ENCODE measurements at regions of chr1 and their contacts with region 1.

Region 1: GRCh38 chr1:116151739-116152576 is 40.8 kb downstream of the MAB21L3 start:
- DNase-seq: peak; percentile 88 to 94 (median 93)
- ATAC-seq: peak; percentile 99
- H3K4me3 ChIP-seq: peak overlapping the region; percentile 45
- H3K27ac ChIP-seq: peak overlapping the region; percentile 51; the same call in 1 of the 3 replicates
- H3K4me1 ChIP-seq: peaks cover 4 to 7% of the 10 kb centered on the region in 2 experiments
- H3K27me3 ChIP-seq: peaks cover 7% of the 10 kb centered on the region in 2 experiments; a peak in 2 of 5 replicates
- CTCF ChIP-seq: peak; percentile 94 to 99 (median 97)
- EP300 ChIP-seq: no peak
- POLR2A ChIP-seq: no peak
- RAD21 ChIP-seq: peak; percentile 92 to 93

Region 2: GRCh38 chr1:116139592-116140134 is 12.3 kb before region 1 on chr1:
- CTCF ChIA-PET with region 1: interaction called, 4 read pairs
- POLR2A ChIA-PET with region 1: interaction called, 5 read pairs
- in situ Hi-C with region 1: no loop called
- intact Hi-C with region 1: loop called (anchors 1 kb)
- DNase-seq: no peak
- ATAC-seq: no peak
- H3K4me3 ChIP-seq: no peak overlapping the region
- H3K27ac ChIP-seq: no peak overlapping the region
- H3K4me1 ChIP-seq: no peaks in the 10 kb centered on the region; a peak in 1 of 5 replicates
- H3K27me3 ChIP-seq: no peaks in the 10 kb centered on the region
- CTCF ChIP-seq: no peak
- EP300 ChIP-seq: no peak
- POLR2A ChIP-seq: no peak
- RAD21 ChIP-seq: no peak

Region 3: DNA sequence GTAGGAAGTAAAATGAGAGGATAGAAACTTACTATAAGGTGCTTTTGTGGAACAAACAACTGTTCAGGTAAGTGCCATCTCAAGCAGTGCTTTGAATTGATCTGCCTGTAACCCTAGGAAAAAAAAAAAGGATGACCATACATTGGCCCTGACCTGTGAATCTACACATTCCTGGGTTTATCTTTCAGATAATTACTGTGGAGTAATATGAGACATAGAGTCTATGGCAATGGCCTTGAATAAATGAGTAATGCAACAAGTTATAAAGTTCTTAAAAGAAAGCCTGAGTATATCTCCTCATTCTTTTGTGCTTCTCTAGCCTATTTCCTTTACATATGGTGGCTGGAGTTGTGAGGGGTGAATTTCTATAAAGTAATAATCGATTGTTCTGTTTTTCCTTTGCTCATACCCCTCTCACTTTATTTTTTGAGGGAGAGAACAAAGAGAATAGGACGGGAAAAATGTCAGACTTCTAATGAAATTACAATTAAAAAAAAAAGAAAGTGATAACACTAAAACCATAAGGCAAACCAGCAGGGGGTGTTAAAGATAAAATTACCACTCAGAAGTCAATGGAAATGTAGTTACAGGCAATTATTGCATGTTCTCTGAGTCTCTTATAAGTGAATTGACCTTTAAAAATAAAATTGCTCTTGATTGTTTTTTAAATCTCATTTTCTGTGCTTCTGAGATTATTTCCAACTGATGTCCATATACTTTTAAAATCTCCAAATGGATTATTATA is 208.6 kb after region 1 on chr1:
- CTCF ChIA-PET with region 1: no interaction called
- POLR2A ChIA-PET with region 1: no interaction called
- in situ Hi-C with region 1: no loop called
- intact Hi-C with region 1: loop called (anchors 5 kb)
- DNase-seq: peak; percentile 39 to 59 (median 50)
- ATAC-seq: peak; percentile 65
- H3K4me3 ChIP-seq: no peak overlapping the region
- H3K27ac ChIP-seq: no peak overlapping the region
- H3K4me1 ChIP-seq: no peaks in the 10 kb centered on the region; a peak in 1 of 5 replicates
- H3K27me3 ChIP-seq: peaks cover 3 to 5% of the 10 kb centered on the region in 2 experiments; a peak in 3 of 5 replicates
- CTCF ChIP-seq: peak; percentile 31 to 75 (median 32); a peak in 3 of 6 replicates
- EP300 ChIP-seq: no peak
- POLR2A ChIP-seq: no peak
- RAD21 ChIP-seq: peak; percentile 52 to 87

Measured in K562 (cell line).